GM12878 (cell line): ENCODE measurements at regions of chr6 and their contacts with region 1.

Region 1: DNA sequence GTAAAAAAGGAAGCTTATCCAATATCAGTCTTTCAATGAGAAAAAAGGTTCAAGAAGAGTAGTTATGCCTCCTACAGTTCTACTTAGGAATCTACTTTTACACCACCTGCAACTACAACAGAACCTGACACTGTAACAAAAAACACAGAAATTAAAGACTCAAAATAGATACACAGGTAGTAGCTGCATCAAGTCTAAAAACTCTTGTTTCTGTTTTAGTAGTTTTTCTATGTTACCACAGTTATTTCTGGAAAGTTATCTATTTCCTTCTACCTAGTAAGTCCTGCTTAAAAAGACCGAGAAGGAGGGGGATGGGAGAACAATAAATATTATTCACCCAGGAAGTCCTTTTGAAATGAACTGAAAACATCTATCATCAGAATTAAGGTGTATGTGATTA is 52.5 kb downstream of the ATG5 start:
- DNase-seq: peak; percentile 4
- ATAC-seq: peak; percentile 61
- H3K4me3 ChIP-seq: no peak overlapping the region
- H3K27ac ChIP-seq: no peak overlapping the region
- H3K4me1 ChIP-seq: peaks cover 23% of the 10 kb centered on the region
- H3K27me3 ChIP-seq: no peaks in the 10 kb centered on the region
- CTCF ChIP-seq: 0 out of 6 replicates have a peak, but pooled peaks of 2 of the 3 experiments have one; percentile 6 to 20
- EP300 ChIP-seq: no peak
- POLR2A ChIP-seq: no peak
- RAD21 ChIP-seq: peak; percentile 28; the same call in 1 of the 2 replicates

Region 2: DNA sequence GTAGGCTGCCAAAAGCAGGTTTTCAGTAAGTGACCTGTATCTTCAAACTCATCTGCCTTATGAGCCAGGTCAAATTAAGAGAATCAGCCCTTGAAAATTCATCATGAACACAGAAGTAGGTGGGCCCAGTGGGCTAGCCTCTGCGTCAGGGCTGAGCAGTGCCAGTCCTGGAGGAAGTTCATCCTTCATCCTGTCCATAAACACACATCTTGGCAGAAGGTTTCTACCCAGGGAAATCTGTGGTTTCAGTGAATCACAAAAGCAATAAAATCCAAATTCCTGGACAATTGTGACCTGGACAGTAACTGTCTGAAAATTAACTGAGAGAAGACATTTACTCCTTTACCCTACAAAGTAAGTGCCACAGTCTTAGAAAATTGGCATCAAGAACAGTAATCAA is 19.9 kb before region 1 on chr6:
- CTCF ChIA-PET with region 1: interaction called, 6 read pairs
- POLR2A ChIA-PET with region 1: interaction called, 3 read pairs
- RAD21 ChIA-PET with region 1: interaction called, 4 read pairs
- SMC1A ChIA-PET with region 1: interaction called, 30 read pairs
- in situ Hi-C with region 1: no loop called
- intact Hi-C with region 1: no loop called
- DNase-seq: no peak
- ATAC-seq: no peak
- H3K4me3 ChIP-seq: no peak overlapping the region
- H3K27ac ChIP-seq: no peak overlapping the region
- H3K4me1 ChIP-seq: no peaks in the 10 kb centered on the region
- H3K27me3 ChIP-seq: no peaks in the 10 kb centered on the region
- CTCF ChIP-seq: no peak
- EP300 ChIP-seq: no peak
- POLR2A ChIP-seq: no peak
- RAD21 ChIP-seq: no peak

Region 3: DNA sequence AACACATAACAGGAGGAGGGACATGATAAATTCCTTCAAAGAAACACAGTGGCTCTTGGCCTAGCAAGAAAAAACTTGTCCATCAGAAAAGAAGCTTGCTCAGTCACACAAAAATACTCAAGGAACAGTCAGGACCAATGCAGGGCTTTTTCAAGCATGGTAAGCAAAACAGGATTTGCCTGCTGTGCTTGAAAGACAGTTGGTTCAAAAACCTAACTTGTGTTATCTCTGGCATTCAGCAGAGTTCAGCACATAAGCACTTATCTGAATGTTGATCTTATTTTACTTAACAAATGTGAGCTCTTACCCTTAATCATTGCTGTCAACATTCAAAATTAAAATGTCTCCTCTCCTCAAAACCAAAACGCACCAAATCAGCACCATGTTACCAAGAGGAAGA is 14.1 kb after region 1 on chr6:
- CTCF ChIA-PET with region 1: interaction called, 11 read pairs
- POLR2A ChIA-PET with region 1: interaction called, 3 read pairs
- RAD21 ChIA-PET with region 1: no interaction called
- SMC1A ChIA-PET with region 1: interaction called, 7 read pairs
- in situ Hi-C with region 1: no loop called
- intact Hi-C with region 1: no loop called
- DNase-seq: no peak
- ATAC-seq: no peak
- H3K4me3 ChIP-seq: no peak overlapping the region
- H3K27ac ChIP-seq: no peak overlapping the region
- H3K4me1 ChIP-seq: no peaks in the 10 kb centered on the region
- H3K27me3 ChIP-seq: no peaks in the 10 kb centered on the region
- CTCF ChIP-seq: no peak
- EP300 ChIP-seq: no peak
- POLR2A ChIP-seq: no peak
- RAD21 ChIP-seq: no peak